CD4-positive, alpha-beta T cell (primary cell): ENCODE measurements at regions of chr21 and their contacts with region 1.

Region 1: DNA sequence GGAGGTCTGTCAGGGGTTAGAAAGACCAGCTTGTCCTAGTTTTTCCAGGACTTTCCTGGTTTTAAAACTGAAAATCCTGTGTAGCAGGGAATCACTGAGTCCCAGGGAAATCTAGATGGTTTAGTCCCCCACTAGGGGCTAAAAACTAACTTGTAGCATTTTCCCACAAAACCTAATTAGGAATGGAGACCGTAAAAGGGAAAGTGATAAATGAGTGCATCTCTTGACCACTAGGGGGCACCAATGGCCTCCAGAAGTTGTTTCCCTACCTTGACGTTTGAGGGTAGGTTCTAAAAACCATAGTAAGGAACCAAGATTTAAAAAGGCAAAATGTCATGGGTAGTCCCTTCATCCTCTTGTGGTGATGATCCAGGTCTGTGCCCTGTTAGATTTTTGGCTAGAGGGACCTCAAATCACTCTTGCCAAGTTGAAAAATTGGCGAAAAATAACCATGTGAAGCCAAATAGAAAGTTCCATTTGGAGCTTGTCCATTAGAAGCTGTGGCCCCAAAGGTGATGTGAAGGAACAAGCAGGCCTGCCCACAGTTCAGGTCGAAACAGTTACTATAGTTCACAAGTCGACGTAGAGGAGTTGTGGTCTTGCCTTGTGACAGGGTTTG is 24.5 kb downstream of the CLIC6 start:
- DNase-seq: peak in 12 of 14 experiments; percentile 8 to 79 (median 30)
- ATAC-seq: peak; percentile 32
- H3K4me3 ChIP-seq: no peak overlapping the region
- H3K4me3 Mint-ChIP-seq: no peak overlapping the region
- H3K27ac ChIP-seq: no peak overlapping the region
- H3K27ac Mint-ChIP-seq: no peak overlapping the region
- H3K4me1 ChIP-seq: no peaks in the 10 kb centered on the region
- H3K4me1 Mint-ChIP-seq: no peaks in the 10 kb centered on the region
- H3K27me3 ChIP-seq: peaks cover 4 to 13% of the 10 kb centered on the region in 2 experiments
- H3K27me3 Mint-ChIP-seq: peaks cover 16% of the 10 kb centered on the region
- CTCF ChIP-seq: peak; percentile 90

Region 2: DNA sequence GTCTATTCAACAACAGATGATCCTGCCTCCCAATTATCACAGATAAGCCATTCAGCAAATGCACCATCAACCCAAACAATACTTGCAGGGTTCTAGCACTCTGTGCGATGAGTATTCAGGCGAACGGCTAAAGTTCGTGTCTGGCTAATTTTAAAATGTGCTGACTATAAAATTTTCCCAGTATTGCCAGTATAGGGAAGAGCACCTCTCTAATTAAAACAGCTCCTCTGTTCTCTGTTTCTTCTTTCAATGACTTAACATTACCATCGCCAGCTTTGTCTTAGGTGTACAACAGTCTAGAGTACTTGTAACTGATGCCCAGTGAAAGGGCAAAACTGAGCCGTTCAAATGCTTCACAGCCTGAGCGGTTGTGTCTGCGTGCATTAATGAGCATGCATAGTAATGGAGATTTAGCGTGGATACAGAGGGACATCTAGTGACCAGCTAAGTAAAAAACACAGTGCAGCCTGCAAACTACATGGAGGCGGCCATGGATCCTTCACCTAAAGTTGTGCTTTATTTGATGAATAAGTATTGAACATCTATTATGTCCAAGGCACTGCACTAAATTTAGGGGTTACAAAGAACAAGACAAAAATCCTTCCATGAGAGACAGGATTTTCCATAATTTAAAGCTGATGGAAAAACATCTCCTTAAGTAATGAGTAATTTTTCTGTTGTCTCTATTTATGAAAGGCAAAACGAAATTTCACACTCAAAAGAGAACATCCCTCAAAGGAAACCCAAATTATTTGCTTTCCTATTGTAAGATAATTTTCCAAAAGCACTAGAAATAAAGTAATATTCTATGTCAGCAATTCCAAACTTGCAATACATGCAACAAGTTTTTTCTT is 1247.0 kb after region 1 on chr21:
- CTCF ChIA-PET with region 1: no interaction called
- POLR2A ChIA-PET with region 1: no interaction called
- intact Hi-C with region 1: loop called in 1 of 2 experiments (anchors 5 kb)
- DNase-seq: peak in 2 of 14 experiments; percentile 47 to 49
- ATAC-seq: no peak
- H3K4me3 ChIP-seq: no peak overlapping the region
- H3K4me3 Mint-ChIP-seq: no peak overlapping the region
- H3K27ac ChIP-seq: no peak overlapping the region
- H3K27ac Mint-ChIP-seq: no peak overlapping the region
- H3K4me1 ChIP-seq: no peaks in the 10 kb centered on the region
- H3K4me1 Mint-ChIP-seq: no peaks in the 10 kb centered on the region
- H3K27me3 ChIP-seq: peaks cover 6 to 10% of the 10 kb centered on the region in 2 experiments
- H3K27me3 Mint-ChIP-seq: peaks cover 10% of the 10 kb centered on the region
- CTCF ChIP-seq: peak; percentile 17

Region 3: GRCh38 chr21:36028127-36029069 is 1335.1 kb after region 1 on chr21:
- CTCF ChIA-PET with region 1: interaction called, 5 read pairs
- POLR2A ChIA-PET with region 1: interaction called, 3 read pairs
- intact Hi-C with region 1: loop called (anchors 1 kb)
- DNase-seq: peak; percentile 25 to 85 (median 56)
- ATAC-seq: peak; percentile 80
- H3K4me3 ChIP-seq: no peak overlapping the region
- H3K4me3 Mint-ChIP-seq: no peak overlapping the region
- H3K27ac ChIP-seq: no peak overlapping the region
- H3K27ac Mint-ChIP-seq: no peak overlapping the region
- H3K4me1 ChIP-seq: peaks cover 5% of the 10 kb centered on the region
- H3K4me1 Mint-ChIP-seq: peaks cover 5% of the 10 kb centered on the region
- H3K27me3 ChIP-seq: no peaks in the 10 kb centered on the region
- H3K27me3 Mint-ChIP-seq: no peaks in the 10 kb centered on the region
- CTCF ChIP-seq: peak; percentile 95